ENCODE measurements at regions of chr17 and their contacts with region 1.

Region 1: GRCh38 chr17:4263282-4264215 is at the start of gene ANKFY1:
- DNase-seq: peak; percentile 92 to 99 (median 98)

Region 2: DNA sequence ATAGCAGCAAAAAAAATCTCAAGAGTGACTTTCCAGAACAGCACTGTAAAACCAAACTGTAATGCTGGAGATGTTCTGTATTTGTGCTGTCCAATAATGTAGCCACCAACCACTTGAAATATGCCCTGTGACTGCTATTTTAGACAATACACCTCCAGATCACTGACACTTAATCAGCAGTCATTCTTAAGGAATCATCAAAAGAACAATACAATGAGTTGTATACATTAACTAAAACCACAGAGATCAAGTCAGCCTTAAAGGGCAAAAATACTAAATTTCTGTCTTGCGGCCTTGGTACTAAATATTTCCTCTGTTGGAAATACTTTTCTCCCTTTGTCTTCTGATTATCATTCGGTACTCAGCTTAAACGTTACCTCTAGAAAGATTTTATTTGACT is 33.8 kb after region 1 on chr17:
- intact Hi-C with region 1: loop called (anchors 5 kb)
- DNase-seq: no peak

Measured in head of caudate nucleus (tissue), 42 donors.